Right ventricle myocardium superior (tissue), 1 donor: ENCODE measurements at regions of chr5 and their contacts with region 1.

Region 1: GRCh38 chr5:140244525-140245025 is 58.3 kb downstream of the PFDN1 start:
- DNase-seq: peak; percentile 96
- ATAC-seq: peak; percentile 63

Region 2: GRCh38 chr5:140084541-140084940 is 160.0 kb before region 1 on chr5:
- intact Hi-C with region 1: no loop called
- DNase-seq: no peak
- ATAC-seq: peak; percentile 92

Region 3: GRCh38 chr5:140174465-140175366 is 69.9 kb before region 1 on chr5 and contains the start of gene CYSTM1:
- intact Hi-C with region 1: loop called (anchors 5 kb)
- DNase-seq: peak; percentile 98
- ATAC-seq: peak; percentile 96
- total RNA-seq, gene CYSTM1: 58.3 TPM

Region 4: GRCh38 chr5:140351609-140352334 is 107.2 kb after region 1 on chr5:
- intact Hi-C with region 1: loop called (anchors 2 kb)
- DNase-seq: no peak
- ATAC-seq: peak; percentile 59